HAP-1 (cell line): ENCODE measurements at regions of chr18 and their contacts with region 1.

Region 1: GRCh38 chr18:29874519-29875098 is 1167.9 kb downstream of the DSC3 start:
- DNase-seq: peak; percentile 51 to 59
- H3K4me3 ChIP-seq: no peak overlapping the region
- H3K4me1 ChIP-seq: no peaks in the 10 kb centered on the region
- H3K27me3 ChIP-seq: no peaks in the 10 kb centered on the region

Region 2: GRCh38 chr18:30271716-30272115 is 397.1 kb after region 1 on chr18:
- in situ Hi-C with region 1: loop called (anchors 5 kb)
- DNase-seq: peak in 1 of 2 experiments; percentile 26
- H3K4me3 ChIP-seq: no peak overlapping the region
- H3K4me1 ChIP-seq: no peaks in the 10 kb centered on the region
- H3K27me3 ChIP-seq: no peaks in the 10 kb centered on the region

Region 3: DNA sequence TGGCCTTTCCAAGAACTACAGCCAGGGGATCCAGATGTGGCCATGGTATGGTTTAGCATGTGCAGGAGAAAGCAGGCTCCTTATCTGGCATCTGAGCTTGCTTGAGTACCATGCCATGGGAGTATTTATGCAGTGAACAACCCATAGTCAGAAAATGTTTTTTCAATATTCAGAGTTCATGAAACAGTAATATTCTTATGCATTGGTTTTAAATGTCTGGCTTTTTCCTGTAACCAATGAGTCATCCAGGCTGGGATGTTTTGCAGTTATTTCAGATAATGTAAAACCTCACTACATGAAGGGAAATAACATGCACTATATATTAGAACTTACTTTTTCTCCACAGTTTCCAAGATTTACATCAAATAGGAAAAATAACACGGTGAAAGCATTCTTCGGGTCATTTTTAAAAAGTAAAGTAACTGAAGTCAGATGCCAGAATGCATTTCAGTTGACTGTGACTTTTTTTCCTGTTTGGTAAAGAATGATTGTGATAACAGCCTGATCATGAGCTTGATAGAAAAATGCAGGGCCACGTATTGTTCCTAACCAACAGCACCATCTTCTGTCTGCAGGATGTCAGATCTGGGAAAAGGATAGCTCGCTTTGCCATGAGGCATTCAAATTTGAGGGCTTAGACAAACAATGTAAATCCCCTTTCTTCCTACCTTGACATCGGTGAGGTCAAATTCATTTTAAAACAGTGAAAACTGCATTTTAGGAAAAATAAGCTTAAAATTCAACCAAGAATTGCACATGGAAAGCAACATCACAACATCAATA is 1015.1 kb after region 1 on chr18:
- in situ Hi-C with region 1: loop called (anchors 25 kb)
- DNase-seq: peak; percentile 48 to 58
- H3K4me3 ChIP-seq: no peak overlapping the region
- H3K4me1 ChIP-seq: peaks cover 2% of the 10 kb centered on the region; the same call in 1 of the 2 replicates
- H3K27me3 ChIP-seq: no peaks in the 10 kb centered on the region